K562 (cell line): ENCODE measurements at regions of chr2 and their contacts with region 1.

Region 1: DNA sequence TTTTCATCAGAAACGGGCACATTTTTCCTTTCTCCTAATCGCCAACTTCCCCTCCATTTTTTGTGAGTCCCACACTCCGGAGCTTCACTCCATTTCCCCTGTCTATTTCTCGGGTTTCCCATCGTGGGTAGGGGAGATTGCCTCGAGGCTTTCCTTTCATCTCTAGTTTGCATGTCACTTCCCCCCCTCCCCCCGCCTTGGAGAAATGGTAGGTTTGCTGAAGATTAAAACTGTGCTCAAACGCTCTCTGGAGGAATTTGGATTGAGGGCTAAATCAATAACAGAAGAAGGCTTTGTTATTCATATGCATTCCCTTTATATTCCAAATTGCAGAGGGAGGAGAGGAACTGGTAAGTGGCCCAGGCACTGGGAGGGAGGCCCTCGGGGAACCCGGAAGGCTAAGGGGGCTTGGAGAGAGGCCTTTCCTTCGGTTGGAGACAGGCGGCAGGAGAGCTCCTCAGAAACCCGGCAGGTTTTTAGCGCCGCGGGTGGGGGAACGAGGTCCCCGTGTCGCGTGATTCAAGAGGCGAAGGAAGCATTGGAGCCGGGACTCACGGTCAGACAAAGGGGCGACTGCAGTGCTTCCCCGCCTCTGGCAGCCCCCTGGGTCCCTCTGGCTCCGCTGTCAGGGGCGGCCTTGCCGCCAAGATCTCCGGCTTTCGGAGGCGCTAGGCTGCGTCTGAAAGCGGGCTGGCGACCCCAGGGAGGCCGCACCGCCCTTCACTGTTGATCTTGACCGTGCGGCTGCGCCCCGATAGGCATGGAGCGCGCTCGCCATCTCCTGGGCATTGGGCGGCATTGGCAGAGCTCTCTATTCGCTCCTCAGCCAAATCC is 2.4 kb upstream of the HOXD12 start:
- DNase-seq: peak; percentile 84 to 86 (median 84)
- ATAC-seq: peak; percentile 96
- H3K4me3 ChIP-seq: peak overlapping the region; percentile 29
- H3K27ac ChIP-seq: no peak overlapping the region
- H3K4me1 ChIP-seq: peaks cover 8 to 33% of the 10 kb centered on the region in 2 experiments
- H3K27me3 ChIP-seq: peaks cover 70 to 80% of the 10 kb centered on the region in 2 experiments
- CTCF ChIP-seq: peak; percentile 84 to 90 (median 87)
- EP300 ChIP-seq: no peak
- POLR2A ChIP-seq: no peak
- RAD21 ChIP-seq: peak; percentile 95 to 96

Region 2: DNA sequence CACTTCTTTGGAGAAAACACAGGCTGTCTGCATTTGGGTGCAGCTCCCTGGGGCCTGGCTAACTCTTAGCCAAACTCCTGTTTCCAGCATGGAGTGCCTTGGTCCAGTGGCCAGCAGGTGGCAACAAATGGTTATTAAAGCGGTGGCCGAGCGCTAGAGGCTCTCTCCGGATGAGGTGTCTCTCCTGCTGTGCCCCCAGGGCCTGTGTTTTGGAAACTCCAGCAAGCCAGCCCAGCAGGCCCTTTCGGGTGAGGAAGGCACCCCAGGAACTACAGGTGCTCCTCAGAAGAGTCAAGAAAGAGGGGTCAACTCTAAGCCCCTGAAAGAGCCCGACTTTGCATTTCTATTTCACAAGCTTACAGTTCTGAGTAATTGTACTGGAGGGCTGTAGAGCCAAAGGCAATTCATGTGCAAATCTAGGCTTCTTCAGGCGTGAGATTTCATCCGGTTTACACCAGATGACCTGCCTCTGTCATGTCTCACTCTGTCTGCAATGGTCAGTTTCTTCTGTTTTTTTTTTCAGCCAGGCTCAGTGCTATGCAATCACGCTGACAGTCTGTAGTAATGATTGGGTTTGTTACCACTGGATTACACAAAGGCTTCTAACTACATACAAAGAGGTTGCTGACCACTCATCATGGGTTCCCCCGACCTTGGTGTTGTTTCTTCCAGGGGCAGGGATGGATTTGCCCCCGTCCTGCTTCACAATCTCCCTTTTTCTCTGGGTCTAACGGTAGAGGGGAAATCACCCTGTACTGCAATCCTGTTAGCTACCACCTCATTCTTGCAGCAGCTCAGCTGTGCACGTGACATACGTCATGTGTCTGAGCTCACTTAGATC is 1325.4 kb before region 1 on chr2:
- CTCF ChIA-PET with region 1: no interaction called
- POLR2A ChIA-PET with region 1: no interaction called
- in situ Hi-C with region 1: no loop called
- intact Hi-C with region 1: loop called (anchors 5 kb)
- DNase-seq: peak; percentile 57 to 74 (median 66)
- ATAC-seq: peak; percentile 99
- H3K4me3 ChIP-seq: no peak overlapping the region
- H3K27ac ChIP-seq: no peak overlapping the region
- H3K4me1 ChIP-seq: no peaks in the 10 kb centered on the region
- H3K27me3 ChIP-seq: peaks cover 0 to 21% of the 10 kb centered on the region in 2 experiments; a peak in 3 of 5 replicates
- CTCF ChIP-seq: peak; percentile 88 to 96 (median 89)
- EP300 ChIP-seq: no peak
- POLR2A ChIP-seq: no peak
- RAD21 ChIP-seq: peak; percentile 85 to 90

Region 3: DNA sequence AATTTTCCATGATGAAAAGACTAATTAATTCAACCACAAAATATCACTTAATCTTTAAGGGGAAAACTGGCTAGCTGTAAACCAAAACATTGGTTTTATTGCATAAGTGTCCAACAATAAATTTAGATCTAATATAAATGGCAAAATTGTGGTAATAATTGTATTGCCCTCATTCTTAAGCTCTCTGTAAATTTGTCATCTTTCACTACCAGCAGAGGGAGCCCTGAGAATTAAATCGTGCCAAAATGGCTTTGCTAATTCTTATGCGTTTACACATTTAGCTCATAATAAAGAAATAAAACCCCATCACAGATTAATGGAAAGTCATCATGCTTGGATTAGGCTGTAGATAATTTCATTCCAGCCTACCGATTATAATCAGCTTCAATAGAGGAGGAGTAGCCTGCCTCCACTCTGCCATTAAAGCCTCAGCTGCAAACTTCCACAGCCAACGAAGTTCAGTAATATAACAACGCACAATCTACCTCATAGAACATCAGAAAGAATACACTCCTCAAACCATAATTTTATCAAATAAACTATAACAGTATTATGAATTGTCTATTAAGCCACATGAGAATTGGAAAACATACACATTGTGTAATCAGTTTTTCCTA is 845.7 kb before region 1 on chr2:
- CTCF ChIA-PET with region 1: no interaction called
- POLR2A ChIA-PET with region 1: no interaction called
- in situ Hi-C with region 1: no loop called
- intact Hi-C with region 1: loop called (anchors 5 kb)
- DNase-seq: peak; percentile 13 to 50 (median 26)
- ATAC-seq: peak; percentile 75
- H3K4me3 ChIP-seq: no peak overlapping the region
- H3K27ac ChIP-seq: no peak overlapping the region
- H3K4me1 ChIP-seq: no peaks in the 10 kb centered on the region
- H3K27me3 ChIP-seq: peaks cover 0 to 4% of the 10 kb centered on the region in 2 experiments; a peak in 1 of 5 replicates
- CTCF ChIP-seq: peak; percentile 56 to 72 (median 60); a peak in 5 of 6 replicates
- EP300 ChIP-seq: no peak
- POLR2A ChIP-seq: no peak
- RAD21 ChIP-seq: peak; percentile 54 to 68

Region 4: GRCh38 chr2:175414882-175415487 is 682.2 kb before region 1 on chr2:
- CTCF ChIA-PET with region 1: interaction called, 5 read pairs
- POLR2A ChIA-PET with region 1: no interaction called
- in situ Hi-C with region 1: no loop called
- intact Hi-C with region 1: loop called (anchors 1 kb)
- DNase-seq: peak; percentile 43 to 56 (median 50)
- ATAC-seq: peak; percentile 95
- H3K4me3 ChIP-seq: no peak overlapping the region
- H3K27ac ChIP-seq: no peak overlapping the region
- H3K4me1 ChIP-seq: peaks cover 6 to 10% of the 10 kb centered on the region in 2 experiments; a peak in 4 of 5 replicates
- H3K27me3 ChIP-seq: no peaks in the 10 kb centered on the region
- CTCF ChIP-seq: peak; percentile 68 to 73 (median 70)
- EP300 ChIP-seq: no peak
- POLR2A ChIP-seq: no peak
- RAD21 ChIP-seq: peak; percentile 55 to 71

Region 5: GRCh38 chr2:175877845-175878544 is 219.2 kb before region 1 on chr2:
- CTCF ChIA-PET with region 1: no interaction called
- POLR2A ChIA-PET with region 1: no interaction called
- in situ Hi-C with region 1: no loop called
- intact Hi-C with region 1: loop called (anchors 5 kb)
- DNase-seq: no peak
- ATAC-seq: no peak
- H3K4me3 ChIP-seq: no peak overlapping the region
- H3K27ac ChIP-seq: no peak overlapping the region
- H3K4me1 ChIP-seq: no peaks in the 10 kb centered on the region
- H3K27me3 ChIP-seq: peaks cover 2 to 9% of the 10 kb centered on the region in 2 experiments; a peak in 3 of 5 replicates
- CTCF ChIP-seq: no peak
- EP300 ChIP-seq: no peak
- POLR2A ChIP-seq: no peak
- RAD21 ChIP-seq: no peak